PC-3 (cell line): ENCODE measurements at regions of chr7 and their contacts with region 1.

Region 1: DNA sequence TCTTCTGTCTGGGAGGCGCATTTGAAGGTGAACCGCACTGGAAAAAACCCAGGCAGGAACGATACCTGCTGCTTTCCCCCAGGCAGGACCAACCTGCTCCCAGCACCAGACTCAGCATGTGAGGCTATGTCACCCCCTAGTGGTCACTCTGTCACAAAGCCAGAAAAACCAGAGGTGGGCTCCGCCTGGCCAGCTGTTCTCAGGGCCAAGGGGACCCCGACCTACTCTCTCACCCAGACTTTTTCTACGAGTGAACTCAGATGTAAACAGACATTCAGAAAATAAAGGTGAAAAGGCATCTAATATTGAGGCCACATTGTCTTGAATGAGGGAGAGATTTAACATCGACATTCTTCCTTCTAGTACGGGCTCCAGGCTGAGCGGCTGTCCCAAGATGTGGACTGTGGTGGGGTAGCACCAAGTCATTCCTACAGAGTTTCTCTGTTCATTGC is 117.3 kb downstream of the PRKAG2 start:
- DNase-seq: peak; percentile 76
- ATAC-seq: peak; percentile 72
- H3K4me3 ChIP-seq: no peak overlapping the region
- H3K27ac ChIP-seq: no peak overlapping the region
- H3K4me1 ChIP-seq: peaks cover 21% of the 10 kb centered on the region
- H3K27me3 ChIP-seq: no peaks in the 10 kb centered on the region
- CTCF ChIP-seq: peak; percentile 93

Region 2: GRCh38 chr7:151368136-151368571 is 391.5 kb before region 1 on chr7:
- CTCF ChIA-PET with region 1: no interaction called
- POLR2A ChIA-PET with region 1: no interaction called
- intact Hi-C with region 1: loop called (anchors 2 kb)
- DNase-seq: peak; percentile 75
- ATAC-seq: peak; percentile 99
- H3K4me3 ChIP-seq: no peak overlapping the region
- H3K27ac ChIP-seq: no peak overlapping the region
- H3K4me1 ChIP-seq: peaks cover 3% of the 10 kb centered on the region; the same call in 1 of the 2 replicates
- H3K27me3 ChIP-seq: no peaks in the 10 kb centered on the region
- CTCF ChIP-seq: peak; percentile 83

Region 3: GRCh38 chr7:151459726-151460473 is 299.7 kb before region 1 on chr7:
- CTCF ChIA-PET with region 1: no interaction called
- POLR2A ChIA-PET with region 1: no interaction called
- intact Hi-C with region 1: loop called (anchors 10 kb)
- DNase-seq: peak; percentile 92
- ATAC-seq: peak; percentile 85
- H3K4me3 ChIP-seq: peak overlapping the region; percentile 64
- H3K27ac ChIP-seq: peak overlapping the region; percentile 70
- H3K4me1 ChIP-seq: peaks cover 22% of the 10 kb centered on the region
- H3K27me3 ChIP-seq: no peaks in the 10 kb centered on the region
- CTCF ChIP-seq: peak; percentile 34; the same call in 1 of the 2 replicates

Region 4: GRCh38 chr7:151665368-151665767 is 94.2 kb before region 1 on chr7:
- CTCF ChIA-PET with region 1: no interaction called
- POLR2A ChIA-PET with region 1: no interaction called
- intact Hi-C with region 1: no loop called
- DNase-seq: no peak
- ATAC-seq: no peak
- H3K4me3 ChIP-seq: no peak overlapping the region
- H3K27ac ChIP-seq: no peak overlapping the region
- H3K4me1 ChIP-seq: peaks cover 8% of the 10 kb centered on the region
- H3K27me3 ChIP-seq: no peaks in the 10 kb centered on the region
- CTCF ChIP-seq: no peak

Region 5: GRCh38 chr7:151705636-151706276 is 53.9 kb before region 1 on chr7:
- CTCF ChIA-PET with region 1: no interaction called
- POLR2A ChIA-PET with region 1: interaction called, 3 read pairs
- intact Hi-C with region 1: loop called (anchors 5 kb)
- DNase-seq: peak; percentile 56
- ATAC-seq: peak; percentile 86
- H3K4me3 ChIP-seq: peak overlapping the region; percentile 17; the same call in 1 of the 2 replicates
- H3K27ac ChIP-seq: no peak overlapping the region
- H3K4me1 ChIP-seq: peaks cover 9% of the 10 kb centered on the region; the same call in 1 of the 2 replicates
- H3K27me3 ChIP-seq: no peaks in the 10 kb centered on the region
- CTCF ChIP-seq: peak; percentile 80

Region 6: DNA sequence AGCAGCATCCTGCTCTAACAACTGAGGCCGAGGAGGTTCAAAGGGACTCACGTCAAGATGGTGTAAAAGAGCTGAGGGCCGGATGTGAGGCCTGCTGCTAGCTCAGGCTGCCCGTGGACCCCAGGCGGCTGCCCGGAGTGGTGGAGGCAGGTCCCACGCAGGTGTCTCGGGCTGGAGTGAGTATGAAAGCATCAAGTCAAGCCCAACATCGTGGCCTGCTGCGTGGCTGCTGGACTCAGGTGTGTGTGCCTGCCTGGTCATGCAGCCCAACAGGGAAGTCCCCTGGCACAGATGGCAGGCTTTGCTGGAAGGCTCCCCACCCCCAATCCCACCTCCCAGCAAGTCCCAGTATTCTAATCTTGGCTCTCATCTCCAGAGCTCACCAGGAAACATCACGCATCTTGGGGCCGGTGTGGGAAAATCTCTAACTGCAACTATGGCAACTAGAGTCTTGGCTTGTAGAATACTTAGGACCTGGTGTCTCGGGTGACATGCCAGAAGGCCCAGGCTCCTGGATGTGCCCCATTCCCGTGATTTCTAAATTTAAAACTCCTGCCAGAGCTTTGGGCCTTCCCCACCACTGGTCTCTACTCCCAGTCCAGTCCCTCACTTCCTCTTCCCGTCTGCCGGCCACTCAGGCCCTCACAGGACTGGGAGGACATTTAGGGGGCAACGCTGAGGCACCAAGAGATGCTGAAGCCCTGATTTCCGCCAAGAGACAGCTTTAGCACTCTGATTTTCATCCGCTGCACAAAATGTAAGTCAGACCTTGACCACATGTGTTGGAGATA is 31.4 kb after region 1 on chr7:
- CTCF ChIA-PET with region 1: no interaction called
- POLR2A ChIA-PET with region 1: no interaction called
- intact Hi-C with region 1: no loop called
- DNase-seq: no peak
- ATAC-seq: no peak
- H3K4me3 ChIP-seq: no peak overlapping the region
- H3K27ac ChIP-seq: no peak overlapping the region
- H3K4me1 ChIP-seq: peaks cover 22% of the 10 kb centered on the region
- H3K27me3 ChIP-seq: no peaks in the 10 kb centered on the region
- CTCF ChIP-seq: no peak